ENCODE measurements at regions of chr16 and their contacts with region 1.

Region 1: GRCh38 chr16:85610508-85611332 is 2.4 kb upstream of the GSE1 start:
- DNase-seq: peak; percentile 73 to 93 (median 84)
- ATAC-seq: peak; percentile 74
- H3K4me3 ChIP-seq: peak overlapping the region; percentile 57
- H3K4me3 Mint-ChIP-seq: peak overlapping the region; percentile 92
- H3K27ac ChIP-seq: no peak overlapping the region
- H3K27ac Mint-ChIP-seq: peak overlapping the region; percentile 66
- H3K4me1 ChIP-seq: peaks cover 57% of the 10 kb centered on the region
- H3K4me1 Mint-ChIP-seq: peaks cover 15% of the 10 kb centered on the region
- H3K27me3 ChIP-seq: peaks cover 6% of the 10 kb centered on the region in 2 experiments
- H3K27me3 Mint-ChIP-seq: peaks cover 11% of the 10 kb centered on the region
- CTCF ChIP-seq: peak; percentile 94

Region 2: GRCh38 chr16:85275533-85276249 is 335.0 kb before region 1 on chr16:
- CTCF ChIA-PET with region 1: no interaction called
- POLR2A ChIA-PET with region 1: no interaction called
- intact Hi-C with region 1: loop called in 1 of 2 experiments (anchors 10 kb)
- DNase-seq: peak; percentile 39 to 72 (median 58)
- ATAC-seq: peak; percentile 77
- H3K4me3 ChIP-seq: no peak overlapping the region
- H3K4me3 Mint-ChIP-seq: no peak overlapping the region
- H3K27ac ChIP-seq: no peak overlapping the region
- H3K27ac Mint-ChIP-seq: no peak overlapping the region
- H3K4me1 ChIP-seq: no peaks in the 10 kb centered on the region
- H3K4me1 Mint-ChIP-seq: no peaks in the 10 kb centered on the region
- H3K27me3 ChIP-seq: peaks cover 0 to 4% of the 10 kb centered on the region in 2 experiments
- H3K27me3 Mint-ChIP-seq: no peaks in the 10 kb centered on the region
- CTCF ChIP-seq: peak; percentile 59

Region 3: DNA sequence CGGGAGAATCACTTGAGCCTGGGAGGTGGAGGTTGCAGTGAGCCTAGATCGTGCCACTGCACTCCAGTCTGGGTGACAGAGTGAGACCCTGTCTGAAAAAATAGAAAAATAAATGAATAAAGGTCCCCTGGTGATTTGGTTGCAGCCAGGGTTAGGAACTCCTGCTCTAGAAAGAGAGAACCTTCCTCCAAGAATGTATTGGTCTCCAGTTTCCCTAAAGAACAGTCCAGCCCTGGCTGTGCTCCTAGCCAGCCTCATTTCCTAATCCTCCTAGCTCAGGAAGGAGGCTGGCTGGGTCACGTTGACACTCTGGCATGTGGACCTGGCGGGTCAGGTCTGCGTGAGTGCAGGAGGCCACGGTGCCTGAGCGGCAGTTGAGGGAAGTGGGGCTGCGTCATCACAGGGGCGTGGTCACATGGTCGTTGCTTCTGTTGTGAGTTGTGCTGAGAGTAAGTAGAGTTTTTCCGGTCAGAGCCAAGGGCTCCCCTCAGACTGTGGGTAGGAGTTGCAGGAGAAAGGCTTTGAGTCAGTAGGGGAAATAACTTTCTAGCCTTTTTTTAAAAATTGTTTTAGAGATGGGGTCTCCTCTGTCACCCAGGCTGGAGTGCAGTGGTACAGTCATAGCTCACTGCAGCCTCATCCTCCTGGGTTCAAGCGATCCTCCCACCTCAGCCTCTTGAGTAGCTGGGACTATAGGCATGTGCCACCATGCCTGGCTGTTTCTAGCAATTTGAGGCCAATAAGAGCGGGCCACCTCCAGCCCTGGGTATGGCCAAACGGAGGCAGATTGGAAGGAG is 304.5 kb before region 1 on chr16:
- CTCF ChIA-PET with region 1: no interaction called
- POLR2A ChIA-PET with region 1: interaction called, 3 read pairs
- intact Hi-C with region 1: loop called (anchors 2 kb)
- DNase-seq: peak; percentile 62 to 91 (median 78)
- ATAC-seq: peak; percentile 88
- H3K4me3 ChIP-seq: no peak overlapping the region
- H3K4me3 Mint-ChIP-seq: peak overlapping the region; percentile 35
- H3K27ac ChIP-seq: peak overlapping the region in 1 of 2 donors; percentile 41
- H3K27ac Mint-ChIP-seq: peak overlapping the region; percentile 86
- H3K4me1 ChIP-seq: peaks cover 80% of the 10 kb centered on the region
- H3K4me1 Mint-ChIP-seq: peaks cover 61% of the 10 kb centered on the region
- H3K27me3 ChIP-seq: peaks cover 0 to 5% of the 10 kb centered on the region in 2 experiments
- H3K27me3 Mint-ChIP-seq: no peaks in the 10 kb centered on the region
- CTCF ChIP-seq: no peak

Region 4: DNA sequence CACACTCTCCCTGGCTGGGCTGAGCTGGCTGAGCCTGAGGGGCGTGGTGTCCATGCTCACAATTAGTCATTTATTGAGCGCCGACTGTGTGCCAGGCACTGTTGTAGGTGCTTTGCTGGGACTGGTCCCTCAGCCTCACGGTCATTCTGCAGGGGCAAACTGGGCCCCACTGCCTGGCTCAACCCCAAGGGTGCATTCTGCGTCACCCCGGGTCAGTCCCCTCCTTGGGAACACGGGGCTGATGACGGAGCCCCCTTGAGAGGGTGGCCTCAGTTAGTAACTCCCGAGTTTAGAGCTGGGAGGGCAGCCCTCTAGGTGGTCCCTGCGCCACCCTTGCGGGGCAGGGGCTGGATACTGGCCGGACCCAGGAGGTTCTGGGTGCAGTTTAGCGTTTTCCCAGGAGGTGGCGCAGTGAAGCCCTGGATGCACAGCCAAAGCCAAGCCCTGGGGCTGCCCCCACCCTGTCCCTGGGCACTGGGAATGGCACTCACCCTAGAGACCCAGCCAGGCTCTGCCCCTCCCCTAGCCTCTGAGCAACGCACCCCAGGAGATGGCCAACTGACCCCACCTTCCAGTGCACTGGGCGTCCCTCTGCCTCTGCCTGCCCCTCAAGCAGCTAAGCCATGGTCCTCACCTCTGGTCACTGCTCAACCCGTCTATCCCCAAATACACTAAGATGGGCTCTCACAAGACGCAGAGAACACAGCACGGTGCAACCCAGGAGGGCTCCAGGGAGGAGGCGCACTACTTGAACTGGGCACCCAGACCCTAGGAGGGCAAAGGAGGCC is 240.8 kb before region 1 on chr16:
- CTCF ChIA-PET with region 1: no interaction called
- POLR2A ChIA-PET with region 1: interaction called, 3 read pairs
- intact Hi-C with region 1: loop called in 1 of 2 experiments (anchors 1 kb)
- DNase-seq: peak; percentile 16 to 59 (median 34)
- ATAC-seq: peak; percentile 59
- H3K4me3 ChIP-seq: no peak overlapping the region
- H3K4me3 Mint-ChIP-seq: no peak overlapping the region
- H3K27ac ChIP-seq: no peak overlapping the region
- H3K27ac Mint-ChIP-seq: no peak overlapping the region
- H3K4me1 ChIP-seq: no peaks in the 10 kb centered on the region
- H3K4me1 Mint-ChIP-seq: no peaks in the 10 kb centered on the region
- H3K27me3 ChIP-seq: peaks cover 0 to 2% of the 10 kb centered on the region in 2 experiments
- H3K27me3 Mint-ChIP-seq: no peaks in the 10 kb centered on the region
- CTCF ChIP-seq: peak; percentile 77

Region 5: GRCh38 chr16:85420501-85421337 is 190.0 kb before region 1 on chr16:
- CTCF ChIA-PET with region 1: interaction called, 38 read pairs
- POLR2A ChIA-PET with region 1: interaction called, 11 read pairs
- intact Hi-C with region 1: loop called (anchors 1 kb)
- DNase-seq: peak; percentile 50 to 89 (median 71)
- ATAC-seq: peak; percentile 86
- H3K4me3 ChIP-seq: no peak overlapping the region
- H3K4me3 Mint-ChIP-seq: no peak overlapping the region
- H3K27ac ChIP-seq: no peak overlapping the region
- H3K27ac Mint-ChIP-seq: no peak overlapping the region
- H3K4me1 ChIP-seq: peaks cover 15% of the 10 kb centered on the region
- H3K4me1 Mint-ChIP-seq: no peaks in the 10 kb centered on the region
- H3K27me3 ChIP-seq: no peaks in the 10 kb centered on the region
- H3K27me3 Mint-ChIP-seq: no peaks in the 10 kb centered on the region
- CTCF ChIP-seq: peak; percentile 100

Region 6: GRCh38 chr16:85528528-85529387 is 82.0 kb before region 1 on chr16:
- CTCF ChIA-PET with region 1: interaction called, 4 read pairs
- POLR2A ChIA-PET with region 1: no interaction called
- intact Hi-C with region 1: loop called in 1 of 2 experiments (anchors 2 kb)
- DNase-seq: peak in 6 of 14 experiments; percentile 8 to 56 (median 26)
- ATAC-seq: no peak
- H3K4me3 ChIP-seq: no peak overlapping the region
- H3K4me3 Mint-ChIP-seq: no peak overlapping the region
- H3K27ac ChIP-seq: no peak overlapping the region
- H3K27ac Mint-ChIP-seq: no peak overlapping the region
- H3K4me1 ChIP-seq: no peaks in the 10 kb centered on the region
- H3K4me1 Mint-ChIP-seq: no peaks in the 10 kb centered on the region
- H3K27me3 ChIP-seq: no peaks in the 10 kb centered on the region
- H3K27me3 Mint-ChIP-seq: no peaks in the 10 kb centered on the region
- CTCF ChIP-seq: peak; percentile 35

Region 7: DNA sequence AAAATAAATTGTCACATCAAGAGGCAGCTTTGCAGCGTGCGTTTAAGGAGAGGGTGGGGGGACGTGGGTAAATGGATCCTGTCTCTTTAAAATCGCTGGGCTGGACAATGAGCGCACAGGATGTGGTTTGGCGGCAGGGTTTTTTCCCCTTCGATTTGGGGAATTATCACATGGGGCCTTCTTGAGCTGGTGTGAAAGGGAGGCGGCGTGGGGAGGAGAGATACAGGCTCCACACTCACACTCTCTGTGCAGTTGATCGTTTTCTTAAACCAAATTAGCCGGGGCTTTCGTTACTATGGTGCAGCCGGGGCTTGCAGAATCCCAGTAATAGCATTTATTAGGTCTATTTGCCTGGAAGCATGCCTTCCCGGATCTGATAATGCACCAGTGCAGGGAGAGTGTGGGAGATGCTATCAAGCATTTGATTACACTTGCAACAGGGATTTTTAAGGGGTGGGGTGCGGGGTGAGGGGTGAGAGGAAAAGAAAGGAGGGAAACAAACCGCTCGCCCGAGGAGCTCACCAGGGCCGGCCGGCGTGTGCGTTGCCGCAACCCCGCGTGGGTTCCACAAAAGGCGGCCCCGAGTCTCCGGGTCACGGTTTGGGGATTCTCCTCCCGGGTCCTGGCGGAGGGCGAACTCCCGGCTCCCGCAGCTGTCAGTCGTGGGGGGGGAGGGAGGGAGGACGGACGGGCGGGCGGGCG is 56.5 kb before region 1 on chr16:
- CTCF ChIA-PET with region 1: interaction called, 12 read pairs
- POLR2A ChIA-PET with region 1: interaction called, 14 read pairs
- intact Hi-C with region 1: loop called (anchors 1 to 2 kb)
- DNase-seq: peak in 13 of 14 experiments; percentile 36 to 91 (median 51)
- ATAC-seq: peak; percentile 33
- H3K4me3 ChIP-seq: peak overlapping the region; percentile 88
- H3K4me3 Mint-ChIP-seq: peak overlapping the region; percentile 99
- H3K27ac ChIP-seq: peak overlapping the region; percentile 53 to 68
- H3K27ac Mint-ChIP-seq: peak overlapping the region; percentile 86
- H3K4me1 ChIP-seq: peaks cover 33% of the 10 kb centered on the region
- H3K4me1 Mint-ChIP-seq: peaks cover 34% of the 10 kb centered on the region
- H3K27me3 ChIP-seq: no peaks in the 10 kb centered on the region
- H3K27me3 Mint-ChIP-seq: no peaks in the 10 kb centered on the region
- CTCF ChIP-seq: no peak

Region 8: DNA sequence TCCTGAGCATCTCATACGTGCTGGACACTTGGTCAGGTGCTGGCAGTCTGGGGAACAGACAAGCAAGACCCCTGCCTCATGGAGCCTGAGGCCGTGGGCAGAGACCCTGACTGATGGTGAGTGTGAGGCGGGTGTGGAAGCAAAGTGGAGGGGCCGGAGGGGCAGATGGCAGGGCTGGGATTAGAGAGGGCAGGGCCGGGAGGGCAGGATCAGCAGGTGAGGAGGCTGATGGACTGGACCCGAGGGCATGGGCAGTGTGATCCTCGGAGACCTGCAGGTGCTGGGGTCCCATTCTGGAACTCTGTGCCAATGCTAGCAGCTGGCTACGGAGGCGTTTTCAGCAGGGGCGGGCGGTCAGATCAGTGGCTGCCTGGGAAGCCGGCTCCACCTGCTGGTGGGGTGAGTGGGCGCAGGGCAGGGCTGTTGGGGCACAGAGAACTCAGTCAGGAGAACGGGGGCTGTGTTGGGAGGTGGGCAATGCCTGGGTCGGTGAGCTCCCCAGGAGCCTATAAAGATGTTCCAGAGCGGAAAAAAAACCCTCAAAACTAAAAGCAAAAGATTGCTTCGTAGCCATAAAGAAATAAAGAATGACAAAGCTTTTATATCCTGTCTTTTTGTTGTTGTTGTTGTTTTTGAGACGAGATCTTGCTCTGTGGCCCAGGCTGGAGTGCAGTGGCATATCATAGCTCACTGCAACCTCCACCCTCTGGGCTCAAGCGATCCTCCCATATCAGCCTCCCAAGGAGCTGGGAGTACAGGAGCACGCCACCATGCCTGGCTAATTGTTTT is 149.1 kb after region 1 on chr16:
- CTCF ChIA-PET with region 1: no interaction called
- POLR2A ChIA-PET with region 1: no interaction called
- intact Hi-C with region 1: no loop called
- DNase-seq: peak in 9 of 14 experiments; percentile 6 to 51 (median 17)
- ATAC-seq: no peak
- H3K4me3 ChIP-seq: no peak overlapping the region
- H3K4me3 Mint-ChIP-seq: no peak overlapping the region
- H3K27ac ChIP-seq: no peak overlapping the region
- H3K27ac Mint-ChIP-seq: no peak overlapping the region
- H3K4me1 ChIP-seq: peaks cover 11% of the 10 kb centered on the region
- H3K4me1 Mint-ChIP-seq: peaks cover 8% of the 10 kb centered on the region
- H3K27me3 ChIP-seq: peaks cover 0 to 10% of the 10 kb centered on the region in 2 experiments
- H3K27me3 Mint-ChIP-seq: peaks cover 27% of the 10 kb centered on the region
- CTCF ChIP-seq: peak; percentile 39

Measured in CD4-positive, alpha-beta T cell (primary cell).